Gastrocnemius medialis (tissue), 4 donors: ENCODE measurements at regions of chr17 and their contacts with region 1.

Region 1: GRCh38 chr17:75749545-75750389 is 15.2 kb downstream of the GALK1 start:
- DNase-seq: peak; percentile 66 to 79
- ATAC-seq: peak; percentile 64 to 67
- H3K4me3 ChIP-seq: no peak overlapping the region
- H3K27ac ChIP-seq: no peak overlapping the region
- H3K4me1 ChIP-seq: peaks cover 16 to 19% of the 10 kb centered on the region in 2 donors
- H3K27me3 ChIP-seq: no peaks in the 10 kb centered on the region
- CTCF ChIP-seq: peak; percentile 92 to 97 (median 97)
- POLR2A ChIP-seq: no peak

Region 2: DNA sequence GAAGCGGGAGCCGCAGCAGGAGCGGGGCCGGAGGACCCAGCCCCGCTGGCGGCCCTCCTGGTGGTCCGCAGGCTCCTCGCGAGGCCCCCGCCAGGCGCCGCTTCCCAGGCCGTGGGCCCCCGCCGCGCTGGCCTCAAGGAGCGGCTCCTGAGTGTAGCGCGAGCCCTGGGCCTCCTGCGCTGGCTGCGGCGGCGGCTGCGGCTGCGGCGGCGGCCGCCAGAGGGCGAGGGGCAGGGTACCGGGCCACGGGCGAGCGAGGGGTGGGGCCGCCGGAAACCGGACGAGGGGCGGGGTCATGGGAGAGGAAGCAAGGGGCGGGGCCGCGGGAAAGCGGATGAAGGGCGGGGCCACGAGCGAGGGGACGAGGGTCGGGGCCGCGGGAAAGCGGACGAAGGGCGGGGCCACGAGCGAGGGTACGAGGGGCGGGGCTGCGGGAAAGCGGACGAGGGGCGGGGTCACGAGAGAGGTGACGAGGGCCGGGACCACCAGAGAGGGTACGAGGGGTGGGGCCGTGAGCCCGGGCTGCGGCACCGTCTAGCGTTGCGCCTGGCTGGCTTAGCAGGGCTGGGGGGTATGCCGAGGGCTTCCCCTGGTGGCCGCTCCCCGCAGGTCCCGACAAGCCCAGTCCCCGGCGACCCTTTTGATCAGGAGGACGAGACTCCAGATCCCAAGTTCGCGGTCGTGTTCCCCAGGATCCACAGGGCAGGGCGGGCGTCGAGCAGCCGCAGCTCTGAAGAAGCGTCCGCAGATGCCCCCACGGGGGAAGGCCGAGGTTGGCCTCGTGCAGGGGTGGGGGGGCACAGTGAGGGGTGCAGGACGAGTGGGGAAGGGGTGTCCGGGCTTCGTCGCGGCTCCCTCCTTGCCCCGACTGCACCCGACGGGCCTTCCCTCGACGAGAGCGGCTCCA is 160.5 kb before region 1 on chr17:
- in situ Hi-C with region 1: no loop called
- intact Hi-C with region 1: loop called (anchors 2 kb)
- DNase-seq: peak; percentile 88 to 89
- ATAC-seq: peak; percentile 87 to 88
- H3K4me3 ChIP-seq: peak overlapping the region; percentile 50 to 70 (median 66)
- H3K27ac ChIP-seq: peak overlapping the region; percentile 67 to 85 (median 79)
- H3K4me1 ChIP-seq: peaks cover 0 to 3% of the 10 kb centered on the region in 2 donors
- H3K27me3 ChIP-seq: peaks cover 18 to 20% (median 19%) of the 10 kb centered on the region in 3 donors
- CTCF ChIP-seq: peak in 4 of 5 experiments; percentile 75 to 97 (median 86)
- POLR2A ChIP-seq: peak; percentile 52

Region 3: DNA sequence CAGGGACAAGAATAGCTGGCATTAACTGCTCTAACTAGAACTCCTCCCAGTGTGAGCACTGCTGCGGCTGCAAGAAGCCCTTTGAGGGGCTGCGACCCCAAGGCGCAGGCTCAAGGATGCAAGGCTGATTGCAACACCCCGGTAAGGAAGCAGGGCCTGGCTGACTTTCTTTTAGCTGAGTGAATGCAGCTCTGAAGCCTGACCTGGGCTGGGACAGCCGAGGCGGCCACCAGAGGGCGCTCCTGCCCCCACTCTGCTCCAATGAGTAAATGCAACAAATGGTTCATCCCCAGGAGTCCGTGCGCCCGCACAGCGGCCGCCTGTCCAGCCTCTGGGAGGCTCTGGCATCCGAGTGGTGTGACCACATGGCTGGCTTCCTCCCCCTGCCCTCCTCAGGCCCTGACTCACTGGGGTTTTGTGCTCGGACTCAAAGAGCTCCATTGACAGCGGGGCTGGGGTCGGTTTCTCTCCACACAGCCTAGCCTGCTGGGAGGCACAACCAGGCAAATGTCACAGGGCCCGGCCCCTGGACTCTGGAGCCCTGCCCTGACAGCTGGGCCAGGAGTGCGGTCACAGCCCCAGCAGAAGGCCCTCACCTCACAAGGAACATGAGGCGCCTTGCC is 116.8 kb before region 1 on chr17 and contains the start of gene SMIM5:
- in situ Hi-C with region 1: loop called in 1 of 4 experiments (anchors 10 kb)
- intact Hi-C with region 1: loop called (anchors 1 kb)
- DNase-seq: peak; percentile 63 to 81
- ATAC-seq: peak; percentile 72 to 75
- H3K4me3 ChIP-seq: peak within 1 kb of the TSS in 3 of 4 donors; percentile 4 to 35 (median 12)
- H3K27ac ChIP-seq: peak within 1 kb of the TSS; percentile 70 to 84 (median 76)
- H3K4me1 ChIP-seq: peaks cover 38 to 39% of the 10 kb centered on the region in 2 donors
- H3K27me3 ChIP-seq: no peaks in the 10 kb centered on the region
- CTCF ChIP-seq: peak; percentile 90 to 98 (median 96)
- POLR2A ChIP-seq: peak in 1 of 2 donors; percentile 8
- total RNA-seq, gene SMIM5: 0.22 TPM in 1 of 4 donors, not detected in the others

Region 4: DNA sequence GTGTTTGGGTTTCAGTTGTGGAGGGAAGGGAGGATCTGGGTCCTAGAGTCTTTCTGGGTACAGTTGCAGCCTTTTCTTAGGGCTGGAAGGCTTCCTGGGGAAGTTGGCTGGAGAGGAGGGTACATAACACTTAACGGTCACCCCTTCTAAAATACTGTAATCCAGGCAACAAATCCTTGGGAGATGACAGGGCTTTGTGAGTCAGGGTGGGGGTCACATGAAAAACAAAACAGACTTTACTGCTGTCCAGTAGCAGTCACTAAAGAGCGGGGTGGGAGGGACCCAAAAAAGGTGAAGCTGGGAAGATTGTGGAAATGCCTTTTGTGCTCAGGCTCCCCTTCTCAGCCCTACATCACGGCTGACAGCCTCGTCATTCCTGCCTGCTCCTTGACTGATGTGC is 76.3 kb before region 1 on chr17:
- in situ Hi-C with region 1: loop called (anchors 5 kb)
- intact Hi-C with region 1: loop called (anchors 1 kb)
- DNase-seq: no peak
- ATAC-seq: no peak
- H3K4me3 ChIP-seq: no peak overlapping the region
- H3K27ac ChIP-seq: no peak overlapping the region
- H3K4me1 ChIP-seq: peaks cover 7 to 10% of the 10 kb centered on the region in 2 donors
- H3K27me3 ChIP-seq: no peaks in the 10 kb centered on the region
- CTCF ChIP-seq: no peak
- POLR2A ChIP-seq: no peak

Region 5: DNA sequence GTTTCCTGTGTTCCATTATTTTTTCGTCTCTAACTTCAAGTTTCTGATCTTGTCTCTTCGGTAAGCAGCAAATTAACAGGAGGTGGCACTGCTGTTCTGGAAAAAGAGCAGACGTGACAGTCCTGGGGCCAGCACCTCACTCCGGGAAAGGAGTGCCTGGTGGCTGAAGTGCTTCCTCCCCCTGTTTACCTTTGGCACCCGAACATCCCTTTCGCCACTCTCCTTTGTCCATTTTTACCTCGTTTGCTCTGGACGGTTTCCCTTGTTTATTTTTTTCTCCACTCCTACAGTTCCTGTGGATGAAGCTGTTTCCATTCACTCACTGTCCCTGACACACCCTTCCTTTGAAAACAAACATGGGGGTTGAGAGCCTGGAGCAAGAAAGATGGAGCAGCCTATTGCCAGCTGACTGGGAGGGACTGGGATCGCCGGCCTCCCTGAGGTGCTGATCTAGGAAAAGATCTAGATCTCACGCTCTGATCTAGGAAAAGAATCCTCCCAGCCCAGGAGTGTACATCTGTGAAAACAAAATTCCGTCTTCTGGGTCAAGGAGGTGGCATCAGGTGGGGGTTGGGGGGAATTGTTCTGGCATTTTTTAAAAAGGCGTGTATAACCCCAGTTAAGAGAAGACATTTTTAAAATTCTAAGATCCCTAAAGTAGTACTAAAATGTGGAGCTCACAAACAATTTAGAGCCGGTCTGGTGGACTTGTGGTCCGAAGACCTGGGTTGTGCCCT is 69.9 kb before region 1 on chr17:
- in situ Hi-C with region 1: loop called in 2 of 4 experiments (anchors 5 kb)
- intact Hi-C with region 1: loop called (anchors 1 kb)
- DNase-seq: no peak
- ATAC-seq: peak in 1 of 2 donors; percentile 45
- H3K4me3 ChIP-seq: no peak overlapping the region
- H3K27ac ChIP-seq: peak overlapping the region in 3 of 4 donors; percentile 25 to 67 (median 33)
- H3K4me1 ChIP-seq: peaks cover 13 to 17% of the 10 kb centered on the region in 2 donors
- H3K27me3 ChIP-seq: no peaks in the 10 kb centered on the region
- CTCF ChIP-seq: peak in 2 of 5 experiments; percentile 31 to 47
- POLR2A ChIP-seq: no peak

Region 6: DNA sequence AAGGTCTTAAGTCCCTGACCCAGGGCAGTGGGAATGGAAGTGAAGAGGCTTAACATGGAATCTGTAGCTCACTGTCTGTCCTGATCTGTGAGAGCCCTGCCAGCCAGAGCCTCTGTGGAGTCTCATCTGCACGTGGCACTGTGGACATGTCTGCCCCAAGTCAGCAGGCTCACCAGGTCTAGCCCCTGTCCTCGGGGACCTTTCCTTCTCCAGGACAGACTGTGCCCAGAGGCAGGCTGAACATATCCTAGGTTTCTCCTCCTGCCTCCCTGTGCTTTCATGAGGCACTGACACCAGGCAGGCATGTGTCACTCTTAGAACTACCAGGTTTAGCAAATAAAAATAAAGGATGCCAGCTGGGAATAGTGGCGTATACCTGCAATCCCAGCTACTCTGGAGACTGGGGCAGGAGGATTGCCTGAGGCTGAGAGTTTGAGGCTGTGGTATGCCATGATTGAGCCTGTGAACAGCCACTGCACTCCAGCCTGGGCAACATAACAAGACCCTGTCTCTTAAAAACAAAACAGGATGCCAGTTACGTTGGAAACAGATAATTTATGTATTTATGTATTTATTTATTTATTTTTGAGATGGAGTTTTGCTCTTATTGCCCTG is 57.2 kb after region 1 on chr17:
- in situ Hi-C with region 1: no loop called
- intact Hi-C with region 1: no loop called
- DNase-seq: peak in 1 of 2 donors; percentile 18
- ATAC-seq: peak in 1 of 2 donors; percentile 18
- H3K4me3 ChIP-seq: no peak overlapping the region
- H3K27ac ChIP-seq: peak overlapping the region in 1 of 4 donors; percentile 91
- H3K4me1 ChIP-seq: peaks cover 22 to 24% of the 10 kb centered on the region in 2 donors
- H3K27me3 ChIP-seq: no peaks in the 10 kb centered on the region
- CTCF ChIP-seq: no peak
- POLR2A ChIP-seq: no peak

Region 7: DNA sequence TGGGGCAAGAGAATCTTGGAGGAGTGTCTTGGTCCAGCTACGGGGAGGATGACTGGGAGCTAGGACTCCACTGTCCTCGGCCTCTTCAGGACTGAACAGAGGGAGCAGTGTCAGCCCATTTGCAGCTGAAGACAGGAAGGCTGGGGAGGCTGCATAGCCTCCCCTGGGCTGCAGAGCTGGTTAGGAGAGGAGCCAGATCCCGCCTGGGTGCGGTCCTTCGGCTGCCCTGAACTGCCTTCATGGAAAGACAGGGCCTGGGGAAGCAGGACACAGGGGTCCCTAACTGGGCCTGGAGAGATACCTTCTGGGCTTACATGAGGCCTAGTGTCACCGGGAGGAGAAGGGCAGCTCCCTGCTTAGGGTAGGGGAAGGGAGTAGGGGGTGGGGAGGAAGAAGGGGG is 67.8 kb after region 1 on chr17:
- in situ Hi-C with region 1: no loop called
- intact Hi-C with region 1: no loop called
- DNase-seq: no peak
- ATAC-seq: no peak
- H3K4me3 ChIP-seq: no peak overlapping the region
- H3K27ac ChIP-seq: no peak overlapping the region
- H3K4me1 ChIP-seq: no peaks in the 10 kb centered on the region
- H3K27me3 ChIP-seq: no peaks in the 10 kb centered on the region
- CTCF ChIP-seq: no peak
- POLR2A ChIP-seq: no peak